Heart right ventricle (tissue), 16 donors: ENCODE measurements at regions of chr20 and their contacts with region 1.

Region 1: DNA sequence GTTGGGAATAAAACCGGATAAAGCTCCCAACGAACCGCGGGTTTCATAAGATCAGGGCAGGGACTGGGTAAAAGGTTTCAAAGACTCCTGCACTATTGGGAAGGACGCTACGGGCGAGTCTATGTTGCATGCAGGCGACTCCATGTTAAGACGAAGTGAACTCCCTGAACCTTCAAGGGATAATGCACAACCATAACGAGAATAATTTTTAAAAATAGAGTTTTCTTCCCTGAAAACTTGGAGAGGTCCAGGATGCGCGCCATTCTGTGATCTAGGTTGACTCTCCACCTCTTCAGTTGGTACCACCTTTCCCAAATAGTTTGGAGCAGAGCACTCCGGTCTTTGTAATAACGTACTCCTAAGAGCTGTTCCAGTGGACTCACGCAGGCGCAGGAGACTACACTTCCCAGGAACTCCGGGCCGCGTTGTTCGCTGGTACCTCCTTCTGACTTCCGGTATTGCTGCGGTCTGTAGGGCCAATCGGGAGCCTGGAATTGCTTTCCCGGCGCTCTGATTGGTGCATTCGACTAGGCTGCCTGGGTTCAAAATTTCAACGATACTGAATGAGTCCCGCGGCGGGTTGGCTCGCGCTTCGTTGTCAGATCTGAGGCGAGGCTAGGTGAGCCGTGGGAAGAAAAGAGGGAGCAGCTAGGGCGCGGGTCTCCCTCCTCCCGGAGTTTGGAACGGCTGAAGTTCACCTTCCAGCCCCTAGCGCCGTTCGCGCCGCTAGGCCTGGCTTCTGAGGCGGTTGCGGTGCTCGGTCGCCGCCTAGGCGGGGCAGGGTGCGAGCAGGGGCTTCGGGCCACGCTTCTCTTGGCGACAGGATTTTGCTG is at the start of gene TPX2:
- DNase-seq: peak; percentile 91 to 96
- ATAC-seq: peak; percentile 99 to 100 (median 99)
- H3K4me3 ChIP-seq: peak within 1 kb of the TSS; percentile 49 to 86 (median 69)
- H3K27ac ChIP-seq: peak within 1 kb of the TSS; percentile 14 to 88 (median 81)
- H3K4me1 ChIP-seq: peaks cover 0 to 33% (median 4%) of the 10 kb centered on the region in 9 donors
- H3K27me3 ChIP-seq: no peaks in the 10 kb centered on the region
- CTCF ChIP-seq: peak in 2 of 9 donors; percentile 23 to 29
- total RNA-seq, gene TPX2: 0.17 to 9.6 (median 0.85) TPM

Region 2: DNA sequence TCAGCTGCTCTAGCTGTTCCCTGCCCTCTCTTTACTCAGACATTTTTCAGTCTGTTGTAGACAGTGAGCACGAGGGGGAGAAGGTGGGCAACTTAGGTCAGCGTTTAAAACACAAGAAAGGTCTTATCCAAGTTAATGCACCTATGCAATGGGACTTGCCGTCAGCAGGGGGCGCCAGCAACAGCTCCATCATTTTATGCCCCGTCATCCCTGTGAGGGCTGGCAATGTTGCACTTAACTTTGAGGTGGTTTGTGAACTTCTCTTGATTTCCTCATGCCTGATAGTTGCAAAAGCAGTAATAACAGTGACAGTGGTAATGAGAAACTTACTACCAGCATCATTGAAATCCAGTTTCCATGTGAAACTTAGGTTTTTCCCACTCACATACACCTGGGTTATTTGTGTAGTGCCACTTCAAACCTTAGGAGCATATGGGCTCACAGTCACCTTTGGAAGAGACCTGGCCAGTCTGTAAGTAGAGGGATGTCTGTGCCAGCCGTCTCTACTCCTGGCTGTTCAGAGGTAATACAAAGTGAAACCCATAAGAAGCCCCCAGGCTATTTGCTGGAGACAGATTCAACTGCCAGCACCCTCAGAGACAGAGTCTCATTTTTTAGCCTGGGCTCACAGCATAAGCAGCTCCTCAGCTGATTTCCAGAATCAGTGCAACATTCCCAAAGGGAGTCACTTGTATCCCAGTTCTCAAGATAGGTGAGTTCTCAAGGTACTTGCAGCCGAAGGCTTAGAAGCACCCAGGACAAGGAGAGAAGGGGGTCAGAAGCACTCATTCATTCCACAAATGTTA is 178.6 kb before region 1 on chr20:
- intact Hi-C with region 1: loop called in 1 of 10 experiments (anchors 10 kb)
- DNase-seq: peak; percentile 57 to 66
- ATAC-seq: peak in 6 of 8 donors; percentile 17 to 39 (median 23)
- H3K4me3 ChIP-seq: no peak overlapping the region
- H3K27ac ChIP-seq: peak overlapping the region in 2 of 10 donors; percentile 50 to 72
- H3K4me1 ChIP-seq: peaks cover 0 to 27% (median 5%) of the 10 kb centered on the region in 9 donors
- H3K27me3 ChIP-seq: no peaks in the 10 kb centered on the region
- CTCF ChIP-seq: peak; percentile 76 to 91 (median 86)

Region 3: GRCh38 chr20:31751126-31751525 is 12.2 kb after region 1 on chr20:
- intact Hi-C with region 1: no loop called
- DNase-seq: peak in 1 of 2 donors; percentile 37
- ATAC-seq: peak in 3 of 8 donors; percentile 50 to 57 (median 55)
- H3K4me3 ChIP-seq: no peak overlapping the region
- H3K27ac ChIP-seq: peak overlapping the region in 5 of 10 donors; percentile 33 to 73 (median 68)
- H3K4me1 ChIP-seq: peaks cover 0 to 10% (median 0%) of the 10 kb centered on the region in 9 donors
- H3K27me3 ChIP-seq: no peaks in the 10 kb centered on the region
- CTCF ChIP-seq: no peak

Region 4: GRCh38 chr20:31990641-31991338 is 251.8 kb after region 1 on chr20:
- intact Hi-C with region 1: no loop called
- DNase-seq: no peak
- ATAC-seq: no peak
- H3K4me3 ChIP-seq: no peak overlapping the region
- H3K27ac ChIP-seq: no peak overlapping the region
- H3K4me1 ChIP-seq: peaks cover 0 to 6% (median 0%) of the 10 kb centered on the region in 9 donors
- H3K27me3 ChIP-seq: peaks cover 0 to 30% (median 23%) of the 10 kb centered on the region in 7 donors
- CTCF ChIP-seq: no peak